HepG2 (cell line): ENCODE measurements at regions of chr6 and their contacts with region 1.

Region 1: GRCh38 chr6:109009236-109009961 is 85.2 kb downstream of the SESN1 start:
- DNase-seq: peak; percentile 72
- ATAC-seq: peak; percentile 98
- H3K4me3 ChIP-seq: peak overlapping the region; percentile 74 to 98 (median 97)
- H3K27ac ChIP-seq: peak overlapping the region; percentile 79
- H3K4me1 ChIP-seq: peaks cover 42% of the 10 kb centered on the region
- H3K27me3 ChIP-seq: no peaks in the 10 kb centered on the region; a peak in 2 of 5 replicates
- CTCF ChIP-seq: no peak
- EP300 ChIP-seq: no peak
- POLR2A ChIP-seq: peak; percentile 54 to 79
- RAD21 ChIP-seq: 0 out of 2 replicates have a peak, but pooled peaks have one; percentile 64

Region 2: DNA sequence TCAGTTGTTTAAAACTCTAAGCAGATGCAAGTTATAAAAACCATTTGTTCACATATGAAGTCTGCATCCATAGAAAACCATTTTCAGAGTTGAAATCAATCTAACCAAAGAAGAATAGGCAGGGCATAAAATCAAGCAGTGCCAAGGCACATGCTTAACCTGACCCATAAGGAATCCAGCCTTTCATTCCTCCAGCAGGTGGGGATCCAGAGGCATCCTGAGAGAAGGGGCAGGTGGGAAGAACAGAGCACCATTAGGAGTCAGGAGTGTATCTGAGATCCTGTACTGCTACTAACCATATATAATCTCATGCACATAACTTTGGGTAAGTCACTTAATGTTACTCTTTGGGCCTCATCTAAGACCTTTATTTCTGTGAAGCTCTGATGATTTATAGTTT is 478.1 kb before region 1 on chr6:
- CTCF ChIA-PET with region 1: no interaction called
- POLR2A ChIA-PET with region 1: no interaction called
- in situ Hi-C with region 1: no loop called
- intact Hi-C with region 1: no loop called
- DNase-seq: no peak
- ATAC-seq: no peak
- H3K4me3 ChIP-seq: no peak overlapping the region
- H3K27ac ChIP-seq: no peak overlapping the region
- H3K4me1 ChIP-seq: peaks cover 24% of the 10 kb centered on the region
- H3K27me3 ChIP-seq: no peaks in the 10 kb centered on the region; a peak in 1 of 5 replicates
- CTCF ChIP-seq: no peak
- EP300 ChIP-seq: no peak
- POLR2A ChIP-seq: no peak
- RAD21 ChIP-seq: no peak

Region 3: GRCh38 chr6:108904741-108905140 is 104.7 kb before region 1 on chr6:
- CTCF ChIA-PET with region 1: no interaction called
- POLR2A ChIA-PET with region 1: no interaction called
- in situ Hi-C with region 1: no loop called
- intact Hi-C with region 1: no loop called
- DNase-seq: peak; percentile 26
- ATAC-seq: no peak
- H3K4me3 ChIP-seq: no peak overlapping the region
- H3K27ac ChIP-seq: no peak overlapping the region
- H3K4me1 ChIP-seq: peaks cover 15% of the 10 kb centered on the region
- H3K27me3 ChIP-seq: peaks cover 1 to 12% of the 10 kb centered on the region in 2 experiments; a peak in 2 of 5 replicates
- CTCF ChIP-seq: no peak
- EP300 ChIP-seq: no peak
- POLR2A ChIP-seq: no peak
- RAD21 ChIP-seq: no peak

Region 4: GRCh38 chr6:109024784-109025183 is 15.4 kb after region 1 on chr6:
- CTCF ChIA-PET with region 1: no interaction called
- POLR2A ChIA-PET with region 1: no interaction called
- in situ Hi-C with region 1: no loop called
- intact Hi-C with region 1: no loop called
- DNase-seq: no peak
- ATAC-seq: no peak
- H3K4me3 ChIP-seq: no peak overlapping the region
- H3K27ac ChIP-seq: no peak overlapping the region
- H3K4me1 ChIP-seq: no peaks in the 10 kb centered on the region
- H3K27me3 ChIP-seq: no peaks in the 10 kb centered on the region
- CTCF ChIP-seq: no peak
- EP300 ChIP-seq: no peak
- POLR2A ChIP-seq: no peak
- RAD21 ChIP-seq: no peak

Region 5: DNA sequence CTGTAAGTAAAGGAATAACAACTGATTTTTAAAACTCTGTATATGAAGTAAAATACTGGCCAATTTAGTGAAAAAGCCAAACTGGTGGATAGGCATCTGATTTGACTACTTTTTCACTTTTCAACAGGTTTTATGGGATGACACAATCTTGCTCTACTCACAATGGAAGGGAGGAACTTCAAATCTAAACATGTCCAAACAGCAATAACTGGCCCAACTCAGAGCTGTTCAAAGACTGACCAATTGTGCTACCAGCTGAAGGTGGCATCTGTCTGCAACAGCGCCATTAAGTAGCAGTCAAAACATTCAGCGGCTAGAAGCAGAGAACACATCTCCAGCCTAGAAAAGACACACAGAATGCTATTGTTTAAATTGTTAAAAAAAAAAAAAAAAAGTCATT is 40.6 kb after region 1 on chr6:
- CTCF ChIA-PET with region 1: no interaction called
- POLR2A ChIA-PET with region 1: interaction called, 5 read pairs
- in situ Hi-C with region 1: no loop called
- intact Hi-C with region 1: loop called (anchors 2 kb)
- DNase-seq: peak; percentile 79
- ATAC-seq: peak; percentile 91
- H3K4me3 ChIP-seq: peak overlapping the region in 2 of 3 experiments; percentile 15 to 25; a peak in 1 of 6 replicates
- H3K27ac ChIP-seq: peak overlapping the region; percentile 52
- H3K4me1 ChIP-seq: peaks cover 48% of the 10 kb centered on the region
- H3K27me3 ChIP-seq: no peaks in the 10 kb centered on the region
- CTCF ChIP-seq: no peak
- EP300 ChIP-seq: no peak
- POLR2A ChIP-seq: no peak
- RAD21 ChIP-seq: no peak

Region 6: GRCh38 chr6:109095027-109095834 is 85.8 kb after region 1 on chr6 and contains the start of gene CEP57L1:
- CTCF ChIA-PET with region 1: no interaction called
- POLR2A ChIA-PET with region 1: interaction called, 18 read pairs
- in situ Hi-C with region 1: no loop called
- intact Hi-C with region 1: no loop called
- DNase-seq: peak; percentile 93
- ATAC-seq: peak; percentile 81
- H3K4me3 ChIP-seq: peak within 1 kb of the TSS; percentile 74 to 98 (median 89)
- H3K27ac ChIP-seq: peak within 1 kb of the TSS; percentile 96
- H3K4me1 ChIP-seq: peaks cover 45% of the 10 kb centered on the region
- H3K27me3 ChIP-seq: no peaks in the 10 kb centered on the region; a peak in 1 of 5 replicates
- CTCF ChIP-seq: no peak
- EP300 ChIP-seq: no peak
- POLR2A ChIP-seq: peak; percentile 52 to 87; a peak in 3 of 4 replicates
- RAD21 ChIP-seq: no peak
- total RNA-seq, gene CEP57L1: 15.5 and 20.7 TPM in 2 replicates